PC-3 (cell line): ENCODE measurements at regions of chr12 and their contacts with region 1.

Region 1: GRCh38 chr12:42023733-42024494 is 120.8 kb downstream of the GXYLT1 start:
- DNase-seq: peak; percentile 81
- ATAC-seq: peak; percentile 95
- H3K4me3 ChIP-seq: peak overlapping the region; percentile 61
- H3K27ac ChIP-seq: no peak overlapping the region
- H3K4me1 ChIP-seq: no peaks in the 10 kb centered on the region
- H3K27me3 ChIP-seq: no peaks in the 10 kb centered on the region
- CTCF ChIP-seq: peak; percentile 97

Region 2: GRCh38 chr12:40946612-40947194 is 1077.2 kb before region 1 on chr12:
- CTCF ChIA-PET with region 1: interaction called, 3 read pairs
- POLR2A ChIA-PET with region 1: no interaction called
- intact Hi-C with region 1: loop called (anchors 1 kb)
- DNase-seq: peak; percentile 53
- ATAC-seq: no peak
- H3K4me3 ChIP-seq: no peak overlapping the region
- H3K27ac ChIP-seq: no peak overlapping the region
- H3K4me1 ChIP-seq: no peaks in the 10 kb centered on the region
- H3K27me3 ChIP-seq: 0 out of 2 replicates have a peak, but pooled peaks cover 6% of the 10 kb centered on the region
- CTCF ChIP-seq: peak; percentile 73

Region 3: GRCh38 chr12:41264281-41264680 is 759.6 kb before region 1 on chr12:
- CTCF ChIA-PET with region 1: interaction called, 5 read pairs
- POLR2A ChIA-PET with region 1: no interaction called
- intact Hi-C with region 1: loop called (anchors 1 kb)
- DNase-seq: peak; percentile 35
- ATAC-seq: peak; percentile 54; the same call in 1 of the 2 replicates
- H3K4me3 ChIP-seq: no peak overlapping the region
- H3K27ac ChIP-seq: no peak overlapping the region
- H3K4me1 ChIP-seq: no peaks in the 10 kb centered on the region
- H3K27me3 ChIP-seq: peaks cover 40% of the 10 kb centered on the region
- CTCF ChIP-seq: peak; percentile 68

Region 4: GRCh38 chr12:41684997-41685396 is 338.9 kb before region 1 on chr12:
- CTCF ChIA-PET with region 1: no interaction called
- POLR2A ChIA-PET with region 1: no interaction called
- intact Hi-C with region 1: loop called (anchors 10 kb)
- DNase-seq: no peak
- ATAC-seq: no peak
- H3K4me3 ChIP-seq: no peak overlapping the region
- H3K27ac ChIP-seq: no peak overlapping the region
- H3K4me1 ChIP-seq: no peaks in the 10 kb centered on the region
- H3K27me3 ChIP-seq: peaks cover 13% of the 10 kb centered on the region
- CTCF ChIP-seq: peak; percentile 35; the same call in 1 of the 2 replicates